Activated CD4-positive, alpha-beta T cell treated with anti-CD3 and anti-CD28 coated beads, Interleukin-2, amount 10 ng/mL, durations not matched to agents 7 days and 5 days (primary cell): ENCODE measurements at regions of chr7 and their contacts with region 1.

Region 1: GRCh38 chr7:2982831-2983230 is 60.8 kb downstream of the CARD11 start:
- DNase-seq: peak; percentile 77
- H3K4me3 Mint-ChIP-seq: peak overlapping the region; percentile 32
- H3K27ac Mint-ChIP-seq: peak overlapping the region; percentile 88
- H3K4me1 Mint-ChIP-seq: peaks cover 85% of the 10 kb centered on the region
- H3K27me3 Mint-ChIP-seq: no peaks in the 10 kb centered on the region

Region 2: GRCh38 chr7:2999078-2999500 is 16.3 kb after region 1 on chr7:
- CTCF ChIA-PET with region 1: interaction called, 16 read pairs
- POLR2A ChIA-PET with region 1: no interaction called
- DNase-seq: no peak
- H3K4me3 Mint-ChIP-seq: no peak overlapping the region
- H3K27ac Mint-ChIP-seq: no peak overlapping the region
- H3K4me1 Mint-ChIP-seq: peaks cover 7% of the 10 kb centered on the region
- H3K27me3 Mint-ChIP-seq: no peaks in the 10 kb centered on the region